Heart left ventricle (tissue), 16 donors: ENCODE measurements at regions of chr3 and their contacts with region 1.

Region 1: GRCh38 chr3:188257384-188258026 is 103.5 kb downstream of the LPP start:
- DNase-seq: no peak
- ATAC-seq: no peak
- H3K4me3 ChIP-seq: no peak overlapping the region
- H3K27ac ChIP-seq: peak overlapping the region in 10 of 12 donors; percentile 1 to 89 (median 42)
- H3K4me1 ChIP-seq: peaks cover 2 to 66% (median 40%) of the 10 kb centered on the region in 12 donors
- H3K27me3 ChIP-seq: no peaks in the 10 kb centered on the region
- CTCF ChIP-seq: no peak
- POLR2A ChIP-seq: no peak

Region 2: GRCh38 chr3:187974871-187975271 is 282.6 kb before region 1 on chr3:
- intact Hi-C with region 1: loop called in 1 of 10 experiments (anchors 10 kb)
- DNase-seq: no peak
- ATAC-seq: no peak
- H3K4me3 ChIP-seq: no peak overlapping the region
- H3K27ac ChIP-seq: no peak overlapping the region
- H3K4me1 ChIP-seq: peaks cover 0 to 18% (median 0%) of the 10 kb centered on the region in 12 donors
- H3K27me3 ChIP-seq: no peaks in the 10 kb centered on the region
- CTCF ChIP-seq: peak in 4 of 12 donors; percentile 14 to 30 (median 20)
- POLR2A ChIP-seq: no peak

Region 3: DNA sequence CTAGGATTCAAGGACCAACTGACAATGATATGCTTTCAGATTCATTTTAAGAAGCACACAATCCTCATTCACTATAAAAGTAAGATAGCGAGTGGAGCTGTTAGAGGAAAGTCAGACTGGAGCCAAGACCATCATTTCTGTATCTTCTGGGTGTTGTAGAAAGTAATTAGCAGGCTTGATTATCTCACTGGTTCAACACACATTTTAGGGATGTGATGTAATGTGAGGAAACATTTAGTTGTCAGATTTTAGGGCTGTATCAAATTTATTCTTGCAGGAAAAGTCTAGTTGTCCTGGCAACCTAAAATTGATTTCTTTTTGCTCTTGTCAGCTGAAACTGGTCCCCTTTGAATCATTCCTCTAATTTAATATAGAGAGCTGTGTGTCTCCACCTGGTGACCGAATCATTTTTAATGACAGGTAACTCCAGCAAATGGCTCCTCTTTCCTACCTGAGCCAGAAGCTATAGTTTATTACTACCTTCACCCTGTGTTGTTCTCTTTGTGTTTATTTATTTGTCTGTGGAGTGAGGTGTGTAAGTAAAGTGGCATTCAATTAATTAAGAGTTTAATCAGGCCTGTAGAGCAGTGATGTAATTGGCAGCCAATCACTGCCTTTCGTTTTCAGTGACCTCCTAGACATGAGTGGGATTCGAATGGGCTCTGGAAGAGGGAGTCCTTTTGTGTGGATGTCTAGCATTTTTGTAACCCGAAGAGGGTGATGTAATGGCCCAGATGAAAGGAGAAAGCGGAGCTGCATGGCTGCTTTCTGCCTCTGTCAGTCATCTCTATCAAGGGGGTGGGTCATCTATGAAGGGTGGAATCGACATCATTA is 22.2 kb after region 1 on chr3:
- intact Hi-C with region 1: no loop called
- DNase-seq: no peak
- ATAC-seq: no peak
- H3K4me3 ChIP-seq: no peak overlapping the region
- H3K27ac ChIP-seq: peak overlapping the region in 7 of 12 donors; percentile 6 to 64 (median 40)
- H3K4me1 ChIP-seq: peaks cover 0 to 62% (median 40%) of the 10 kb centered on the region in 12 donors
- H3K27me3 ChIP-seq: no peaks in the 10 kb centered on the region
- CTCF ChIP-seq: no peak
- POLR2A ChIP-seq: no peak

Region 4: GRCh38 chr3:189862390-189863023 is 1605.0 kb after region 1 on chr3:
- intact Hi-C with region 1: no loop called
- DNase-seq: no peak
- ATAC-seq: no peak
- H3K4me3 ChIP-seq: no peak overlapping the region
- H3K27ac ChIP-seq: no peak overlapping the region
- H3K4me1 ChIP-seq: peaks cover 0 to 11% (median 0%) of the 10 kb centered on the region in 12 donors
- H3K27me3 ChIP-seq: no peaks in the 10 kb centered on the region
- CTCF ChIP-seq: no peak
- POLR2A ChIP-seq: no peak